ENCODE measurements at regions of chr9 and their contacts with region 1.

Region 1: GRCh38 chr9:84343111-84343521 is 2.6 kb upstream of the SLC28A3 start:
- DNase-seq: peak in 1 of 2 experiments; percentile 45
- H3K4me3 ChIP-seq: no peak overlapping the region
- H3K27ac ChIP-seq: no peak overlapping the region
- H3K4me1 ChIP-seq: peaks cover 14% of the 10 kb centered on the region
- H3K27me3 ChIP-seq: no peaks in the 10 kb centered on the region
- CTCF ChIP-seq: no peak

Region 2: GRCh38 chr9:84123648-84124406 is 219.3 kb before region 1 on chr9:
- CTCF ChIA-PET with region 1: interaction called, 17 read pairs
- POLR2A ChIA-PET with region 1: no interaction called
- intact Hi-C with region 1: no loop called
- DNase-seq: no peak
- H3K4me3 ChIP-seq: no peak overlapping the region
- H3K27ac ChIP-seq: no peak overlapping the region
- H3K4me1 ChIP-seq: no peaks in the 10 kb centered on the region
- H3K27me3 ChIP-seq: no peaks in the 10 kb centered on the region
- CTCF ChIP-seq: no peak

Region 3: GRCh38 chr9:84357275-84357674 is 14.2 kb after region 1 on chr9:
- CTCF ChIA-PET with region 1: interaction called, 18 read pairs
- POLR2A ChIA-PET with region 1: no interaction called
- intact Hi-C with region 1: no loop called
- DNase-seq: no peak
- H3K4me3 ChIP-seq: no peak overlapping the region
- H3K27ac ChIP-seq: no peak overlapping the region
- H3K4me1 ChIP-seq: peaks cover 6% of the 10 kb centered on the region; the same call in 1 of the 2 replicates
- H3K27me3 ChIP-seq: no peaks in the 10 kb centered on the region
- CTCF ChIP-seq: no peak

Region 4: DNA sequence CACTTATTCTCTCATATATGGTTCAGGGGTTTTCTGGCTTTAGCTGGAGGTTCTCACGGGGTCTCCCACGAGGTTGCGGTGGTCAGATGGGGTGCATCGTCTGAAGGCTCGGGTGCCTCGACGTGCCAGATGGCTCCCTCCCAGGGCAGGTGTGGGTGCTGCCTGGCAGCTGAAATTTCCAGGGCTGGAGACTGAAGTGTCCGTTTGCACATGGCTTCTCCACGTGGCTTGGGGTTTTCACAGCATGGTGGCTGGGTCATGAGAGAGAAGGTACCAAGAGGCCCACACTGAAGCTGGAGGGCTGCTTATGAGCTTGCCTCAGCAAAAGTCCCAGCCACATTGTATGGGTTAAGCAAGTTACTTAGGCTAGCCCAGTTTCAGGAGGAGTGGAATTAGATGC is 1180.1 kb after region 1 on chr9:
- CTCF ChIA-PET with region 1: no interaction called
- POLR2A ChIA-PET with region 1: interaction called, 15 read pairs
- intact Hi-C with region 1: no loop called
- DNase-seq: no peak
- H3K4me3 ChIP-seq: no peak overlapping the region
- H3K27ac ChIP-seq: no peak overlapping the region
- H3K4me1 ChIP-seq: no peaks in the 10 kb centered on the region
- H3K27me3 ChIP-seq: peaks cover 52% of the 10 kb centered on the region
- CTCF ChIP-seq: no peak

Measured in PC-9 (cell line).